Heart right ventricle (tissue), 16 donors: ENCODE measurements at regions of chr13 and their contacts with region 1.

Region 1: DNA sequence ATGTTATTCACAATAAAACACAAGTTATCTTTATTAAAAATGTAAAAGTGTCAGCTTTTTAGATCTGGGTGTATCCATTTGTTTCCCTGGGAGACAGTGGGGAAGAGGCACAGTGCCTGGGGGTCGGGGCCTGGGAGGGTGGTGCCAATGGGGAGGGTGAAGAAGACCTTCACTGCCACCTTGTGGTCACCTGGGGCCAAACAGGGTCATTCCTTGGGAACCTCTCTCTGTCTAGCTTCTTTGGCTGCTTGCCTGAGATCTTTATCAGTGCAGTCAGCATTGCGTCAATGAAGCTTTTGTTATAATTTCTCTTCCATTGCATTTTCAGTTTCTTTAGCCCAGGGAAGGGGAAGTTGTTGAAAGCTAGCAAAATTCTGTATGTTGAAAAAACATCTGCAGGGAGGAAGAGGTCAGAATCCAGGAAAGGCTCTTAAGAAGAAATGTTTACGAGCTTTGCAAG is 39.1 kb downstream of the PCDH8 start:
- DNase-seq: peak; percentile 42 to 76
- ATAC-seq: peak in 7 of 8 donors; percentile 34 to 88 (median 65)
- H3K4me3 ChIP-seq: no peak overlapping the region
- H3K27ac ChIP-seq: no peak overlapping the region
- H3K4me1 ChIP-seq: peaks cover 0 to 12% (median 5%) of the 10 kb centered on the region in 9 donors
- H3K27me3 ChIP-seq: peaks cover 0 to 6% (median 0%) of the 10 kb centered on the region in 7 donors
- CTCF ChIP-seq: peak; percentile 33 to 74 (median 59)

Region 2: DNA sequence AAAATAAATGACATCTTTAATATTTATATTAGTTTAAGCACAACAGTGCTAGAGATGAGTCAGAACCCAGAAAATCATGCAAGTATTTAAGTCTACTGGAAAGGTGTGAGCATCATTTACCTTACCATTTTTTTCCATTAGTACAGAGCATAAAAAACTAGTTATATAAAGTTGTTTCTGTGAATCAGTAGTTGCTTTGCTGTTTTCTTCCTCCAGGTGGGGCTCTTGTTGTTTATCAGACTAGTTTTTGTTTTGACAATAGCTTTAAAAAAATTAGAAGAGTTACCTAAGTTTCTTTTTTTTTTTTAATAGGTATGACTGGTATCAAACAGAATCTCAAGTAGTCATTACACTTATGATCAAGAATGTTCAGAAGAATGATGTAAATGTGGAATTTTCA is 144.0 kb before region 1 on chr13:
- intact Hi-C with region 1: loop called in 2 of 10 experiments (anchors 10 kb)
- DNase-seq: no peak
- ATAC-seq: no peak
- H3K4me3 ChIP-seq: no peak overlapping the region
- H3K27ac ChIP-seq: no peak overlapping the region
- H3K4me1 ChIP-seq: peaks cover 0 to 3% (median 0%) of the 10 kb centered on the region in 9 donors
- H3K27me3 ChIP-seq: no peaks in the 10 kb centered on the region
- CTCF ChIP-seq: peak in 8 of 9 donors; percentile 10 to 61 (median 47)

Region 3: DNA sequence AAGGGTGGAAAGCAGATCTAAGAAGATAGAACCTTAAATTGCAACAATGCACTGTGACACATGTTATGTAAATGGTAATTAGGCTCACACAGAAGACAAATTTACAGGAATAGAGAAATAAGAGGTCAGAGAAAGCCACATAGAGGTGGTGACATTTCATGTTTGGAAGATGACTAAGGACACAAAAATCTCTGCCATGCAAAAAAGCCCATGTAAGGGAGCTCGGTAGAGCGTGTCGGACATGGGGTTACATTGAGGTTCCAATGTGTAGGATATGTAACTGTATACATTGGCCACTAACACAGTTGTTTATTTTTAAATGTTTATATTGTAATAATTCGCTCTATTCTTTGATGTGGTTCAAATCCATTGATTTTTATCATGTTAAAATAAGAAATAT is 123.0 kb before region 1 on chr13:
- intact Hi-C with region 1: loop called in 1 of 10 experiments (anchors 10 kb)
- DNase-seq: no peak
- ATAC-seq: no peak
- H3K4me3 ChIP-seq: no peak overlapping the region
- H3K27ac ChIP-seq: no peak overlapping the region
- H3K4me1 ChIP-seq: no peaks in the 10 kb centered on the region
- H3K27me3 ChIP-seq: no peaks in the 10 kb centered on the region
- CTCF ChIP-seq: no peak

Region 4: GRCh38 chr13:52746141-52746540 is 63.2 kb before region 1 on chr13:
- intact Hi-C with region 1: loop called in 1 of 10 experiments (anchors 2 kb)
- DNase-seq: no peak
- ATAC-seq: no peak
- H3K4me3 ChIP-seq: no peak overlapping the region
- H3K27ac ChIP-seq: no peak overlapping the region
- H3K4me1 ChIP-seq: no peaks in the 10 kb centered on the region
- H3K27me3 ChIP-seq: peaks cover 0 to 44% (median 23%) of the 10 kb centered on the region in 7 donors
- CTCF ChIP-seq: no peak